ENCODE measurements at regions of chr6 and their contacts with region 1.

Region 1: DNA sequence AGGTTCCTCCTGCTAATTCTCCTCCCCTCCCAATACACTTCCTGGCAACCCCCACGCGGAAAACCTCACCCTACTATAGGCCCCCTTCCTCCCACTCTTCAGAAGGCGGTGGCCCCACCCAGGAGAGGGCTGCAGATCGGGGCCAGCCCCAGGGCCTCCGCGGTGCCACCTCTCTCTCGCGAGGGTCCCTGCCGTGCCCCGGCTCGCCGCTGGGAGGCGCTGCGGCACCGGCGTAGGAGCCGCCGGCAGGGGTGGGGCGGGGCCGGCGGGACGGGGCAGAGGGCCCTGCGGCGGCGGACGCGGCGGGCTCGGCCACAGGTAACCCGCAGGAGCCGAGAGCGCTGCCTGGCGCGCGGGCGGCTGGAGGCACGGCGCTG is at the start of gene ANKRD6:
- DNase-seq: peak; percentile 67 to 98 (median 77)
- ATAC-seq: peak; percentile 99
- H3K4me3 ChIP-seq: peak within 1 kb of the TSS; percentile 87 to 94
- H3K27ac ChIP-seq: peak within 1 kb of the TSS; percentile 19 to 48
- H3K4me1 ChIP-seq: peaks cover 0 to 18% of the 10 kb centered on the region in 2 donors
- H3K27me3 ChIP-seq: no peaks in the 10 kb centered on the region
- CTCF ChIP-seq: peak; percentile 90 to 91
- polyA plus RNA-seq, gene ANKRD6: 34.6 to 50.7 (median 38.6) TPM

Region 2: DNA sequence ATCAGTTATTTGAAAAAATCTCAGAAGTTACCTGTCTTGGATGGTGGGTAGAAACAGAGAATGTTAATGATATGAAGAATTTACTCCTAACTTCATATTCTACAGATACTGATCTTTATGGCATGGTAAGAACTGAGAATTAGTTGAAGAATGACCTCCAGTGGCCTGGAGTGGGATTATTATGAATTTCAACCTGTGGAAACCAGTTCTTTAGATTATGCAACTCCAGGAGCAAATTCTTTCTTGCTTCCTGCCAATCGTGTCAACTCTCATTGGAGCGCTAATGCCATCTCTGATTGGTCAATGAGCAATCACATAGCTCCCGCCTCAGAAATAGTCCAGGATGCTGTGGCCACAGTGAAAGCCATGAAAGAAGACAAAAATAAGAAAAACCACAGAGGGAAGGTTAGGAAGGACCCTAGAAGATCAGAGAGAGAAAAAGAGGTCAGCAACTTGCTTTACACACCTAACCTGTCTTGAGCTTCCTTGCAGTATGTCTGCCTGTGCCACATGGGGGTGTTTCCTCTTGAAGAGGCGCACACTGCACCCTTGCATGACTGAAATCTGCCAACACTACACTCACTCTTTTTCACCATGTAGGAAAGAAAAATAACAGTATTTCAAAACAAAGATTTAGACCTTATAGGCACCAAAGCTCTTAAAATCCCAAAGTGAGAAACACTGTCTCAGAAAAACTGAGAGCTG is 165.3 kb after region 1 on chr6:
- intact Hi-C with region 1: loop called (anchors 5 to 10 kb)
- DNase-seq: peak in 2 of 4 donors; percentile 15 to 28
- ATAC-seq: peak; percentile 92
- H3K4me3 ChIP-seq: no peak overlapping the region
- H3K27ac ChIP-seq: no peak overlapping the region
- H3K4me1 ChIP-seq: no peaks in the 10 kb centered on the region
- H3K27me3 ChIP-seq: no peaks in the 10 kb centered on the region
- CTCF ChIP-seq: no peak

Region 3: DNA sequence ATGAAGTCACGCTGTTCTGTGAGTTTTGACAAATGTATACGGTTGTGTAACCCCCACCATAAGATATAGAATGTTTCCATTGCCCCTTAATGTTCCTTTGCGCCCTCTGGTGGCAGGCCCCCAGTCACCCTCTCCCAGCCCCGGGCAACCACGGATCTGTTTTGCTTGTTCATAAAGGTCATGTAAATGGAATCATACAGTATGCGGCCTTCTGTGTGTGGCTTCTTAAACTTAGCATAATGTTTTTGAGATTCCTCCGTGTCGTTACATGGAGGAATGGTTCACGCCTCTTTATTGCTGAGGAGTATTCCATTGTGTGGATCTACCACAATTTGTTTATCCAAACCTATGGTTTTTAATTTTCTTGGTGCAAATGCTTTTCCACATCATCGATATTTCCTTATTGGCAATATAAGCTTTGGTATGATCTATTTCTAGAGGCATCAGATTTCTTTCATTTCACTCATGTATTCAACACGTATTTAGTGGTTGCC is 177.3 kb after region 1 on chr6:
- intact Hi-C with region 1: loop called (anchors 5 to 10 kb)
- DNase-seq: peak in 3 of 4 donors; percentile 33 to 91 (median 65)
- ATAC-seq: peak; percentile 90
- H3K4me3 ChIP-seq: no peak overlapping the region
- H3K27ac ChIP-seq: no peak overlapping the region
- H3K4me1 ChIP-seq: no peaks in the 10 kb centered on the region
- H3K27me3 ChIP-seq: no peaks in the 10 kb centered on the region
- CTCF ChIP-seq: peak; percentile 63 to 88

Measured in left lung (tissue), 14 donors.